Cardiac septum (tissue), 1 donor: ENCODE measurements at regions of chr15 and their contacts with region 1.

Region 1: GRCh38 chr15:66630801-66631351 is 65.1 kb upstream of the LCTL start:
- DNase-seq: no peak

Region 2: DNA sequence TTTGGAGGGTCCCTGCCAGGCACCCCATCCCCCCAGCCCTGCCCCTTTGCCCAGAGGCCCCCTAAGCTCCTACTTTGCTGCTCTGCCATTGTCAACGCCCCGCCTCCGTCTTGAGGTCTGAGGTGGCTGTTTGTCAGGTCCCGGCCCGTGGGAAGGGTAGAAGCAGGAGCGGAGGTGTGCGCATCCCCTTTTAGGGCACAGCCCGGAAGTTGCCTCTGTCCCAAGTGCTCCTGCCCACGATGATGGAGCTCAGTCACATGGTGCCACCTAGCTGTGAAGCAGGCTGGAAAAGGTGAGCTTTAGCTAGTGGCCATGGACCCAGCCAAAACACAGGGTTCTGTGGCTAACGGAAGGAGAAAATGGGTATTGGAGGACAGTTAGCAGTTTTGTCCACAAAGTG is 36.5 kb before region 1 on chr15:
- intact Hi-C with region 1: loop called (anchors 1 kb)
- DNase-seq: no peak